CD4-positive, alpha-beta T cell (primary cell): ENCODE measurements at regions of chr12 and their contacts with region 1.

Region 1: DNA sequence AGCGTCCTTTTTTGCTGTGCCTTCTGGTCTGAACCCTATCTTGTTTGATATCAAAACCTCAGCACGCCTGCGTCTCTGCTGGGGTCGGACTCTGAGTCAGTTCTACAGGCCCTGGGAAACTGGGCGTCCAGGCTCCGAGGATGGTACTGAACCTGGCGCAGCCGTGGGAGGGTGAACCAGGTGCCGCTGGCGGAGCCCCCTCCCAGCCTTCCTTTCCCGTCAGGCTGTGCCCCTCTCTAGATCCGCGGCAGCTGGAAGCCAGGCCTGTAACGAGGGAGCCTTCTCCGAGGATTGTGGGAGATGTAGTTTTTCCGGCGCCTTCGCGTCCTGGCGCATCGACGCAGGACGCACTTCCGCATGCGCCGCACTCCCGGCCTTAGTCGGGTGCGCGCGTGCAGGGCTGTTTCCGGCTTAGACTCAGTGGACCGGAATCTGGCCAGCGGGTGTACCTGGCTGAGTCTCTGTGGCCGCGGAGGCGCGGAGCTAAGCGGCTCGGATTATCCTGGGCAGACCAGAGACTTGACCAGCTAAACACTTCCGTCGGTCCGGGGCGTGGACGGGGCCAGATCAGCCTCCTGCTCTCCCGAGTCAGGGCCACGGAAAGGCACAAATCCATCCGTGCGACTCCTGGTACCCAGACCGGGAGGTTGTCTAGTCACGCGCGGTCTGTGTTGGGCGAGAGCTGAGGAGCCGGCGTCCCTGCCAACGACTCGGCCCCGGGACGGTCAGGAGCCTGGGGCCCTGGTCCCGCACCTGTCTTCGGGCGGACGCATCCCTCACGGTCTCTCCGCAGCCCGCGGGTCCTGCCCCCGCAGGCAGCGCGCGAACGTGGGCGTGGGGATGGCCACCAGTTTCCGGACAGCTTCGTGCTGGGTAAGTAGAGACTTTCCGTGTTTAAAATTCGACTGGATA is at the start of gene ZNF26:
- DNase-seq: peak; percentile 75 to 95 (median 84)
- ATAC-seq: peak; percentile 96
- H3K4me3 ChIP-seq: peak within 1 kb of the TSS; percentile 85
- H3K4me3 Mint-ChIP-seq: peak within 1 kb of the TSS; percentile 97
- H3K27ac ChIP-seq: peak within 1 kb of the TSS; percentile 76 to 84
- H3K27ac Mint-ChIP-seq: peak within 1 kb of the TSS; percentile 96
- H3K4me1 ChIP-seq: peaks cover 29% of the 10 kb centered on the region
- H3K4me1 Mint-ChIP-seq: peaks cover 38% of the 10 kb centered on the region
- H3K27me3 ChIP-seq: no peaks in the 10 kb centered on the region
- H3K27me3 Mint-ChIP-seq: no peaks in the 10 kb centered on the region
- CTCF ChIP-seq: no peak
- total RNA-seq, gene ZNF26: 29.1 to 31.9 TPM

Region 2: GRCh38 chr12:132921685-132922084 is 64.6 kb before region 1 on chr12:
- CTCF ChIA-PET with region 1: no interaction called
- POLR2A ChIA-PET with region 1: no interaction called
- intact Hi-C with region 1: no loop called
- DNase-seq: no peak
- ATAC-seq: no peak
- H3K4me3 ChIP-seq: no peak overlapping the region
- H3K4me3 Mint-ChIP-seq: no peak overlapping the region
- H3K27ac ChIP-seq: no peak overlapping the region
- H3K27ac Mint-ChIP-seq: no peak overlapping the region
- H3K4me1 ChIP-seq: no peaks in the 10 kb centered on the region
- H3K4me1 Mint-ChIP-seq: no peaks in the 10 kb centered on the region
- H3K27me3 ChIP-seq: no peaks in the 10 kb centered on the region
- H3K27me3 Mint-ChIP-seq: no peaks in the 10 kb centered on the region
- CTCF ChIP-seq: no peak

Region 3: DNA sequence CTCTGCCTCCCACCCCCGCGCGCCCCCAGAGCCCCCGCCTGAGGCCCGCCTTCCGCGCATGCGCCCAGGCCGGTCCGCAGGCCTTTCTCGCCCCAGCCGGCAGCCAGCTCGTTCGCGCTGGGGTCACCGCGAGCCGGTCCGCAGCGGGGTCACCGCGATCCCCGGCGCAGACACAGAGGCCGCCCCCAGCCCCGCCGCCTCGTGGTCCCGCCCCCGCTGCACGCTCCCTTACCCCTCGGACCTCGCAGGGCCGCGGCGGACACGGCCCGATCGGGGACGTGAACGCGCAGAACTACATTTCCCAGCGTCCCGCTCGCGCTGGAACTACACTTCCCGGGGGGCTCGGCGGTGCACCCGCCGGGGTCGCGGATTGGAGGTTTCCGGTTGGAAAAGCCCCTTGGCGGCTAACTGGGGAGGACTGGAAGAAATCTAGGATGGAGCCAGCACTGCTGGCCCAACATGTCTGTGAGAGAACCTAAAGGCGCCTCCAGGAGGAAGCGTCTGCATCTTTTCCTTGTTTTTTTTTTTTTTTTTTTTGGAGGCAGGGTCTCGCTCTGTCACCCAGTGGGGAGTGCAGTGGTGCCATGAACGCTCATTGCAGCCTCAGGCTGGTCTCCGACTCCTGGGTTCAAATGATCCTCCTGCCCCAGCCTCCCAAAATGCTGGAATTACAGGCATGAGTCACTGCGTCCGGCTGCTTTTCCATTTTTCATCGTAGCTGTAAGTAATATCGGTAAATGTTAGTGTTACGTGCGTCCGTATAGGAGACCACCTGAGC is 30.1 kb before region 1 on chr12 and contains the start of gene ZNF605:
- CTCF ChIA-PET with region 1: no interaction called
- POLR2A ChIA-PET with region 1: interaction called, 19 read pairs
- intact Hi-C with region 1: loop called (anchors 1 kb)
- DNase-seq: peak; percentile 63 to 94 (median 79)
- ATAC-seq: peak; percentile 95
- H3K4me3 ChIP-seq: peak within 1 kb of the TSS; percentile 78
- H3K4me3 Mint-ChIP-seq: peak within 1 kb of the TSS; percentile 98
- H3K27ac ChIP-seq: peak within 1 kb of the TSS; percentile 33 to 64
- H3K27ac Mint-ChIP-seq: peak within 1 kb of the TSS; percentile 89
- H3K4me1 ChIP-seq: peaks cover 23% of the 10 kb centered on the region
- H3K4me1 Mint-ChIP-seq: peaks cover 29% of the 10 kb centered on the region
- H3K27me3 ChIP-seq: no peaks in the 10 kb centered on the region
- H3K27me3 Mint-ChIP-seq: no peaks in the 10 kb centered on the region
- CTCF ChIP-seq: no peak
- total RNA-seq, gene ZNF605: 5.3 to 5.8 TPM

Region 4: GRCh38 chr12:133080368-133081158 is 94.3 kb after region 1 on chr12 and contains the start of gene ZNF140:
- CTCF ChIA-PET with region 1: interaction called, 9 read pairs
- POLR2A ChIA-PET with region 1: interaction called, 36 read pairs
- intact Hi-C with region 1: loop called (anchors 1 kb)
- DNase-seq: peak; percentile 86 to 98 (median 92)
- ATAC-seq: peak; percentile 54
- H3K4me3 ChIP-seq: peak within 1 kb of the TSS; percentile 82
- H3K4me3 Mint-ChIP-seq: peak within 1 kb of the TSS; percentile 74
- H3K27ac ChIP-seq: peak within 1 kb of the TSS; percentile 98 to 99
- H3K27ac Mint-ChIP-seq: no peak within 1 kb of the TSS
- H3K4me1 ChIP-seq: peaks cover 23% of the 10 kb centered on the region
- H3K4me1 Mint-ChIP-seq: peaks cover 16% of the 10 kb centered on the region
- H3K27me3 ChIP-seq: no peaks in the 10 kb centered on the region
- H3K27me3 Mint-ChIP-seq: no peaks in the 10 kb centered on the region
- CTCF ChIP-seq: peak; percentile 43
- total RNA-seq, gene ZNF140: 6.6 to 8.5 TPM

Region 5: DNA sequence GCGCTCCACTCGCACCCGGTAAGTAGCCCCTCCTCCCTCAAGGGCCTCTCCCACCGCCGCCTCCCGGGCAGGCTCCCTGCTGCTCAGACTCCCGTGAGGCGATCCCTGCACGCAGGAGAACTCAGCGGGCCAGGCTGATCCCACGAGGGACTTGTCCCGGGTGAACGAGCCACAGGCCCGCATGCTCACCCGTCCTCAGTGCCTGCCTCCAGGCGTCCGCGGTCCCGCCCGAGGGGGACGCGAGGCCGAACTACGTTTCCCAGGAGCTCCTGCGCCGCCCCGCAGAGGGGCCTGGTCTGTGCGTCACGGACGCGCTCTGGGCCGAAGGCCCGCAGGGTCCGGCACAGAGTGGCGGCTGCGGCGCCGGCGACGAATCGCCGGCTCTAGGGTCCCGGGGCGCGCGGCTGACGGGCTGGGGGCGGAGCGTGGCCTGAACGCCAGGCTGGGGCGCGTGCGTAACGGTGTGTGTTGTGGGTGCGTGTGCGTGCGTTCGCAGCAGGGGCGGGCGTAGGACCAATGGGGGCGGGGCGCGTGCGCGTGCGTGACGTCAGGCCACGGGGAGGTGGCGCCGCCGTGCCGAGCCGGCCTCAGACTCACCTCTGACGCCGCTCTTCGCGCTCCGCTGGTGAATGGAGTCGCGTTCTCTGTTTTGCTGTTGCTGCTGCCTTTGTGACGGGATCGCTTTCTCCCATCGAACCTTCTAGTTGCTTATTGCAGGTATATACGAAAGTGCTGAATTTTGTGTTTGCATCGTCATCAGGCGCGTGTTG is 144.0 kb after region 1 on chr12 and contains the starts of genes ZNF10 and ZNF891:
- CTCF ChIA-PET with region 1: no interaction called
- POLR2A ChIA-PET with region 1: interaction called, 23 read pairs
- intact Hi-C with region 1: loop called in 1 of 2 experiments (anchors 5 kb)
- DNase-seq: peak; percentile 95 to 99 (median 96)
- ATAC-seq: peak; percentile 85
- H3K4me3 ChIP-seq: peak within 1 kb of the TSS; percentile 78
- H3K4me3 Mint-ChIP-seq: peak within 1 kb of the TSS; percentile 94
- H3K27ac ChIP-seq: peak within 1 kb of the TSS; percentile 97 to 99
- H3K27ac Mint-ChIP-seq: peak within 1 kb of the TSS; percentile 99
- H3K4me1 ChIP-seq: peaks cover 16% of the 10 kb centered on the region
- H3K4me1 Mint-ChIP-seq: peaks cover 30% of the 10 kb centered on the region
- H3K27me3 ChIP-seq: no peaks in the 10 kb centered on the region
- H3K27me3 Mint-ChIP-seq: no peaks in the 10 kb centered on the region
- CTCF ChIP-seq: no peak
- total RNA-seq, gene ZNF10: 43.3 to 47.8 TPM
- total RNA-seq, gene ZNF891: 4.5 TPM

Region 6: GRCh38 chr12:133181238-133181959 is 195.1 kb after region 1 on chr12 and contains the start of gene ZNF268:
- CTCF ChIA-PET with region 1: interaction called, 9 read pairs
- POLR2A ChIA-PET with region 1: interaction called, 19 read pairs
- intact Hi-C with region 1: loop called (anchors 1 kb)
- DNase-seq: peak; percentile 77 to 93 (median 82)
- ATAC-seq: peak; percentile 89
- H3K4me3 ChIP-seq: peak within 1 kb of the TSS; percentile 75
- H3K4me3 Mint-ChIP-seq: peak within 1 kb of the TSS; percentile 96
- H3K27ac ChIP-seq: peak within 1 kb of the TSS; percentile 65 to 73
- H3K27ac Mint-ChIP-seq: peak within 1 kb of the TSS; percentile 90
- H3K4me1 ChIP-seq: peaks cover 14% of the 10 kb centered on the region
- H3K4me1 Mint-ChIP-seq: peaks cover 38% of the 10 kb centered on the region
- H3K27me3 ChIP-seq: no peaks in the 10 kb centered on the region
- H3K27me3 Mint-ChIP-seq: no peaks in the 10 kb centered on the region
- CTCF ChIP-seq: peak; percentile 59
- total RNA-seq, gene ZNF268: 15.1 to 17.6 TPM